ENCODE measurements at regions of chr7 and their contacts with region 1.

Region 1: GRCh38 chr7:68629-69028 is 123.7 kb upstream of the FAM20C start:
- DNase-seq: no peak
- ATAC-seq: no peak
- H3K4me3 ChIP-seq: no peak overlapping the region
- H3K27ac ChIP-seq: no peak overlapping the region
- H3K4me1 ChIP-seq: no peaks in the 10 kb centered on the region
- H3K27me3 ChIP-seq: no peaks in the 10 kb centered on the region; the same call in 1 of the 2 replicates
- CTCF ChIP-seq: peak; percentile 40

Region 2: DNA sequence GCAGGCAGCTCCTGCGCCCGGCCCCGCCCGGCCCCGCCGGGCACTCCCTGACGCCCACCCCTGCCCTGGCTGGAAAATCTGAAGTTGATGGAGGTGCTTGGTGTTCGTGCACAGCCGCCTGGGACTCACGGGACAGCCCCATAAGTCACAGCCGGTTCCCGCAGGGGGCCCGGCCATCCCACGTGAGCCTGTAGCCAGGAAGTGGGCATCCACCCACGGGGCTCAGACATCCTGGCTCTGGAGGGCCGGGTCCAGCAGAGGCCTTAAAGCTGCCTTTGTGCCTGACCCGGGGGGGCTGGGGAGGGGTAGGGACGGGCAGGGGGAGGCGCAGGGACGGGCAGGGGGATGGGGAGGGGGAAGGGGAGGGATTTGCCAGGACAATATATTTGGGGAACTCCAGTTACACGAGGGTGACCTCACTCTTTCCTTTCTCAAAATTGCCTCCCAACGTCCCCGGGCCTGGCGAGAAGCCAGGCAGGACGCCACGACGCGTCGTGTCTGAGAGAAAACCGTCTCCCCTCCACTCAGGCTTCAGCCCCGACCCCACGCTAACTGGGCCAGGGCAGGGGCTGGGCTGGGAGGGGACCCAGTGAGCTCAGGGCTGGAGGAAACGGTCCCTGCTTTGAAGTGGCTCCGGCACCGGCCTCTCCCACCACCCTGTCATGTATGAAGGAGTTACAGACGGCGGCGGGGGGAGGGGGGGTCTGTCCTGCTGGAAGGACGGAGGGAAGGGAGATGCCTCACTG is 533.1 kb after region 1 on chr7:
- CTCF ChIA-PET with region 1: no interaction called
- POLR2A ChIA-PET with region 1: interaction called, 13 read pairs
- in situ Hi-C with region 1: no loop called
- intact Hi-C with region 1: no loop called
- DNase-seq: no peak
- ATAC-seq: no peak
- H3K4me3 ChIP-seq: no peak overlapping the region
- H3K27ac ChIP-seq: no peak overlapping the region
- H3K4me1 ChIP-seq: no peaks in the 10 kb centered on the region; the same call in 1 of the 2 replicates
- H3K27me3 ChIP-seq: no peaks in the 10 kb centered on the region
- CTCF ChIP-seq: no peak